Activated T-helper 1 cell treated with anti-CD3 and anti-CD28 coated beads, Interleukin-12 subunit alpha, Interleukin-12 subunit beta, Interleukin-2, Interleukin-4 antibody, amounts not matched to agents 30 ng/mL and 10 ng/mL and 1 ng/mL, durations not matched to agents 14 hours and 24 hours and 36 hours (primary cell): ENCODE measurements at regions of chr13 and their contacts with region 1.

Region 1: DNA sequence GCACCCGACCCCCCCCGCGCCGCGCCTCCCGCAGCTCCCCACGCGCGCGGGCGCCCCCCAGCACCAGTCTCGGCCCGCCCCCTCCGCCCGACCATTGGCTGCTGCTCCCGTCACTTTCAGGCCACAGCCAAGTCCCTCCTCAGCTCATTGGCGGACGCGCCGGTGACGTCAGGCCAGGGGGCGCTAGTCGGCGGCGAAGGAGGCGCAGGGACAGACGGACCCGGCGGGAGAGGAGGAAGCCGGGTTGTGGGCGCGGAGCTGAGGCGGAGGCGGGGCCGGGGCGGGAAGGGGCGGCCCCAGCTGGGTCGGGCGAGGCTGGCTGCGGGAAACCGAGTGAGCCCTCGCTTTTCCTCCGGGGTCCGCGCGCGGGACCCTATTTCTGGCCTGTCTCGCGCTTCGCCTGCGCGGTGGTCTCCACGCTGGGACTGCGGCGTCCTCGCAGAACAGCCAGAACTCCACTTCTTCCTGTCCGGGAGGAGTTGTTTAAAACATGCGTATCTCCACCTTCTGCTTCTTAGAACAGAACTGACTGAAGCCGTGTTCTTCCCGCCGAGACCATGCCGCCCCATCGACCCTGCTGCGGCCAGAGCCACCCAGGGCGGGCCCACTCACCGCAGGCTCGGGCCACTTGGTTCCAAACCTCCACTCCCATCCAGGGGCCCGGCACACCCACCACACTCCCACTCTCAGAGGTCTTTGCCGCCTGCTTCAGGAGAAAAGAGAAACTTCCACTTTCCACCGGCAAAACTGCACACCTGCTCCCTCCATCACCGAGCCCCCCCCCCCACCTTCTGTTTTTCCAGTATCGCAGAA is 459 bp upstream of the TMTC4 start:
- DNase-seq: peak; percentile 100
- H3K4me3 Mint-ChIP-seq: peak overlapping the region; percentile 87
- H3K27ac Mint-ChIP-seq: peak overlapping the region; percentile 86
- H3K4me1 Mint-ChIP-seq: peaks cover 31% of the 10 kb centered on the region
- H3K27me3 Mint-ChIP-seq: peaks cover 10% of the 10 kb centered on the region

Region 2: GRCh38 chr13:100088644-100089464 is 586.2 kb before region 1 on chr13 and contains the start of gene PCCA:
- intact Hi-C with region 1: loop called (anchors 5 kb)
- DNase-seq: peak; percentile 80
- H3K4me3 Mint-ChIP-seq: peak within 1 kb of the TSS; percentile 92
- H3K27ac Mint-ChIP-seq: peak within 1 kb of the TSS; percentile 87
- H3K4me1 Mint-ChIP-seq: peaks cover 24% of the 10 kb centered on the region
- H3K27me3 Mint-ChIP-seq: peaks cover 8% of the 10 kb centered on the region
- total RNA-seq, gene PCCA: 8.6 and 9.7 TPM in 2 replicates

Region 3: DNA sequence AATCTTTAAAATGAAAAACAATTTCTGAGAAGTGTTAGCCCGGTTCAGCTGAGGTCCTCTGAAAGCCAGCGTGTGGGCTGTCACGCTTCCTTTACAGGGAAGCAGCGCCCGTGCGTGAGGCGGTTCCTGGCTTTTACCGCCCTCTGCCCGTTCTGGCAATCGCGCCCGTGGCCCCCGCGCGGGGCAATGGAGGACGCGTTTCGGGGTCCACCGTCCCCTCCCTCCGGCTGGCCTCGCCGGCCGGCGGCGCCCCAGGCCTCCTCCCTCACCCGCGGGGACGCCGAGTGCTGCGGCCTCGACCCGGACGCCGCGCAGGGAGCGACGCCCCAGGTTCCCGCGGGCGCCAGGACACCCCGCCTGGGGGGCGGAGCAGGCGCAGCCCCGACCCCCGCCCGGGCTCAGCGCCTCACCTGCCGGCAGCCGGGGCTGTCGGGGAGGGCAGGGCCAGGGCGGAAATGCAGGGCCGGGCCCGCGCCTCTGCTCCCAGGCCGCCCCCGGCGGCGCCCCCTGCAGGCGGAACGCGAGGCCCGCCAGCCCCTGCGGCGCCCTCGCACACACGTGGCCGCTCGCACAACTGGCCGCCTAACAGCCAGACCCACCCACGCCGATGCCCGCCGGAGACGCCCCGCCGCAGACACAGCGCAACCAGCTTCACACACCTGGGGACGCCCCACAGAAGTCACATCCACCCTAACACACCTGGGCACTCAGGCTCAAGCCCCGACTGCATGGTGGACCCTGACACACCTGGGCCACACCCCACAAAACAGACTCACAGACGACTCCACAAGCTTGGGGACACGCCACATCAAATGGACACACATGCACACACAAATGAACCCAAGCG is 86.5 kb before region 1 on chr13 and contains the start of gene GGACT:
- intact Hi-C with region 1: loop called (anchors 1 kb)
- DNase-seq: peak; percentile 79
- H3K4me3 Mint-ChIP-seq: peak within 1 kb of the TSS; percentile 87
- H3K27ac Mint-ChIP-seq: peak within 1 kb of the TSS; percentile 94
- H3K4me1 Mint-ChIP-seq: peaks cover 57% of the 10 kb centered on the region
- H3K27me3 Mint-ChIP-seq: no peaks in the 10 kb centered on the region
- total RNA-seq, gene GGACT: 4.0 and 7.2 TPM in 2 replicates

Region 4: DNA sequence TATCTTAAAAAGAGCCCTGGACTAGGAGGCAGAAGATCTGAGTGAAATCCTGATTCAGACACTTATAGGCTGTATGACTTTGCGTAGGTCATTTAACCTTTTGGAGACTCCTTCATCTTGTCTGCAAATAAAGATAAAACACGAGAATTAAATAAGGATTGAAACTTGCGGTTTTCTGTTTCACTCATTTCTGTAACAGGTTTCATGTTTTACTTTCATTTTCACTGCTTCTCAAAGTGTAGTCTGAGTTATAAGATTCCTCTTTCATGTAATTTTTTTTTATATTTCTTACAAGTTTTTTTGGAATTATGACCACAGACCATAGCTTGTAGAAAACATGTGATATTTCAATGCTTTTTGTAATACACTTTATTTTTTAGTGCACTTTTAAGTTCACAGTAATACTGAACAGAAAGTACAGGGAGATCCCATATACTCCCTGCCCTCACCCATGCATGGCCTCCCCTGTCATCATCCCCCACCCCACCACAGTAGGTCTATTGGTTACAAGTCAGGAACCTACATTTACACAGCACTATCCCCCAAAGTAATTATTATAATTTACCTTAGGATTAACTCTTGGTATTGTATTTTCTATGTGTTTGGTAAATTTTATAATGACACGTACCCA is 952.0 kb after region 1 on chr13:
- intact Hi-C with region 1: loop called (anchors 2 kb)
- DNase-seq: no peak
- H3K4me3 Mint-ChIP-seq: no peak overlapping the region
- H3K27ac Mint-ChIP-seq: peak overlapping the region; percentile 69
- H3K4me1 Mint-ChIP-seq: peaks cover 40% of the 10 kb centered on the region
- H3K27me3 Mint-ChIP-seq: peaks cover 19% of the 10 kb centered on the region